ENCODE measurements at regions of chr1 and their contacts with region 1.

Region 1: GRCh38 chr1:23634842-23635651 is 56.6 kb upstream of the RPL11 start:
- DNase-seq: peak; percentile 70
- H3K4me3 Mint-ChIP-seq: peak overlapping the region; percentile 35
- H3K27ac Mint-ChIP-seq: peak overlapping the region; percentile 36
- H3K4me1 Mint-ChIP-seq: peaks cover 22% of the 10 kb centered on the region
- H3K27me3 Mint-ChIP-seq: peaks cover 2% of the 10 kb centered on the region

Region 2: DNA sequence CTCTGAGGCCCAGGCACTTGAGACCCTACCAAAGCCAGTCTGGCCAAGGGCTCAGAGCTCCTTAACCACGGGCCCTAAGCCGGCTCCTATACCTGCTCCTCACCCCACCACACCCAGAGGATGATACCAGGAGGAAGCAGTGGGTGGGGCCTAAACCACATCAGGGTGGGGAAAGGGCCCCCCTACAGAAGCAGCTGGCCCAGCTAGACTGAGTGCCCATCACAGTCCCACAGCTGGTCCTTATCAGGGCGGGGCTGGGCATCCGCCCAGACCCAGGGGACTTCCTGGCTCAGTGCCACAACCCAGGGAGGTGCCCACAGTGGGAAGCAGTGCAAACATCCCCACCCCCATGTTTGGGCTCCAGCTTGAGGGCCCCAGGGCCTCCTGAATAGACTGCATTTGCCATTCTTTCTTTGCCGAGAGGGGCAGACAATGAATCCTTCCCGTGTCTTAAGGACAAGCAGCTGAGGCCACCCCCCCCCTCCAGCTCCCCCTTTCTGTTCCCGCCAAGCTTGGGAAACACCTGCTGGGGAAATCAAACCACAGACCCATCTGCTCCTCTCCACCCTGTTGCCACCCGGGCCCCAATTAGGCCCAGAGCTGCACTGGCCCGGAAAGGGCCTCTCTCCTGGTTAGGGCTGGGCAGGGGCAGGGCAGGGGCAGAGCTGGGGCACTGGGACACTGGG is 110.2 kb before region 1 on chr1:
- CTCF ChIA-PET with region 1: interaction called, 23 read pairs
- POLR2A ChIA-PET with region 1: no interaction called
- intact Hi-C with region 1: no loop called
- DNase-seq: peak; percentile 38
- H3K4me3 Mint-ChIP-seq: no peak overlapping the region
- H3K27ac Mint-ChIP-seq: peak overlapping the region; percentile 33
- H3K4me1 Mint-ChIP-seq: peaks cover 62% of the 10 kb centered on the region
- H3K27me3 Mint-ChIP-seq: no peaks in the 10 kb centered on the region

Region 3: GRCh38 chr1:23559136-23559984 is 75.7 kb before region 1 on chr1 and contains the start of gene ID3:
- CTCF ChIA-PET with region 1: interaction called, 913 read pairs
- POLR2A ChIA-PET with region 1: interaction called, 10 read pairs
- intact Hi-C with region 1: loop called (anchors 2 kb)
- DNase-seq: peak; percentile 95
- H3K4me3 Mint-ChIP-seq: peak within 1 kb of the TSS; percentile 91
- H3K27ac Mint-ChIP-seq: peak within 1 kb of the TSS; percentile 73
- H3K4me1 Mint-ChIP-seq: peaks cover 49% of the 10 kb centered on the region
- H3K27me3 Mint-ChIP-seq: no peaks in the 10 kb centered on the region
- total RNA-seq, gene ID3: 35.9 to 36.2 TPM

Region 4: DNA sequence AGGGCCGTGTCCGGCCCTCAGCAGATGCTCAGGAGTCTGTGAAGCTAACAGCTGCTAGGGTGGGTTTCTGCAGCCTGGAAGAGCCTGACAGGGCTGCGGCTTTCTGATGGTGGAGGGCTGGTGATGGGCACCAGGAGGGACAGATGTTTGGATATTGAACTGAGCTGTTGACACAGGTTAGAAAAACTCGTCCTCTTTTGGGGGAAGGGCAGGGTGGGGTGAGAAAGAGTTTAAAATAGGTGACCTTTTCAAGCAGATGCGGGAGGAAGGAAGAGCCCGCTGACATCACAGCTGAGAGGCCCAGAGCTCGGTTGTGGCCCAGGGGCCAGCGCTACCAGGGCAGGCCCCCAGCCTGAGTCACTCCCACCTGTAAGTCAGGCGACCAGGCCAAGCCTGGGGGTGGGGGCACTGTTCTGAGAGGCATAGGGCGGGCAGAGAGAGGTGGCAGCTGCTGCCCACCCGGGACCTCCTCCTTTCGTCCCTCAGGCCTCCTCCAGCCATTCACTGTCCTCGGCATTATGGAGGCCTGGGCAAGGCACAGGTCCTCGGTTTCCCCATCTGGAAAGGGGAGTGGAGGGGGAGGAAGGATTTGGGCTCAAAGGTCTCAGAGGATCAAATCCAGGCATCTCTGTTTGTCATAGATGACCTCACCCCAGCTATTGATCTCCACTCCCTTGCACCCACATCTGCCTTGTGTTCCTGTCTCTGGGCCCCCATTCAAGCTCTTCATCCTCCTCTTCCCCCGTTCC is 43.4 kb before region 1 on chr1:
- CTCF ChIA-PET with region 1: interaction called, 37 read pairs
- POLR2A ChIA-PET with region 1: no interaction called
- intact Hi-C with region 1: loop called (anchors 2 kb)
- DNase-seq: peak; percentile 82
- H3K4me3 Mint-ChIP-seq: peak overlapping the region; percentile 13
- H3K27ac Mint-ChIP-seq: peak overlapping the region; percentile 79
- H3K4me1 Mint-ChIP-seq: peaks cover 53% of the 10 kb centered on the region
- H3K27me3 Mint-ChIP-seq: no peaks in the 10 kb centered on the region

Region 5: GRCh38 chr1:23619299-23620188 is 15.5 kb before region 1 on chr1:
- CTCF ChIA-PET with region 1: interaction called, 43 read pairs
- POLR2A ChIA-PET with region 1: no interaction called
- intact Hi-C with region 1: no loop called
- DNase-seq: peak; percentile 90
- H3K4me3 Mint-ChIP-seq: peak overlapping the region; percentile 67
- H3K27ac Mint-ChIP-seq: peak overlapping the region; percentile 76
- H3K4me1 Mint-ChIP-seq: peaks cover 76% of the 10 kb centered on the region
- H3K27me3 Mint-ChIP-seq: no peaks in the 10 kb centered on the region

Region 6: DNA sequence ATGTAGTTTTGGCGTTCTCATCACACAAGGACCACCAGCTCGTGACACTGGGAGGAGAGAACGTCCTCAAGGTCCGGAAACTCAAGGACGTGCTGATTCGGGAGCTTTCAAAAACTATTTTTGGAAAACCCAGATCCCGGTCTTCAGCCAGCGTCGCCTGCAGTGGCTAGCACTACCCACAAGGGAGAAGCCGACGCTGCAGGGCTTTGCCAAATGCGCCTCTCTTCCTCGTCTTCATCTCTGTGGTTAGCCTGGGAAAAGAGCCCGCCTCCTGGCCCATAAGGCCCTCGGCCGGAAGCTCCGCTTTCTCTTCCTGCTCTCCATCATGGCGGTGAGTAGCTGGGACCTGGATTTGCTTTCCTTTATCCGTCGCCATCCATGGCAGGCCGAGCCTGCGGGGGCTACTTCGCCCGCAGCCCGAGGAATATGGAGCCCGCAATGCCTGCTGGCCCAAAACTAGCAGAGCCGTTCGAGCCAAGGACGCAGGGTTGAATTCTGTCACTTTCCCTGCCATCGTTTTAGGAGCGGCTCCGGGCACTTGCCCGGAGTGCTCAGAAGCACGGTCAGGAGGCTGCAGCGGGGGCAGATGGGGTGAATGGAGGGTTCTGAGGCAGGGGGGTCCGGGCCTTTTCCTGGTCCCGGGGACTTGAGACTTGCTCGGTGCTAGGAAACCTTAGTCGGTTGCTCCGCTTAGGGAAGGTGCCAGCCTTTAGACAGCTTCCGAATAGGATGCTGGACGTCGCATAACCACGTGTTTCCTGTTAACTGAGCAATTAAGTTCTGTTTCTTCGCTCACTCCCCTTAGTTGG is 56.7 kb after region 1 on chr1 and contains the start of gene RPL11:
- CTCF ChIA-PET with region 1: interaction called, 10 read pairs
- POLR2A ChIA-PET with region 1: no interaction called
- intact Hi-C with region 1: no loop called
- DNase-seq: peak; percentile 93
- H3K4me3 Mint-ChIP-seq: peak within 1 kb of the TSS; percentile 92
- H3K27ac Mint-ChIP-seq: peak within 1 kb of the TSS; percentile 78
- H3K4me1 Mint-ChIP-seq: peaks cover 42% of the 10 kb centered on the region
- H3K27me3 Mint-ChIP-seq: no peaks in the 10 kb centered on the region
- total RNA-seq, gene RPL11: 1,338 to 1,385 TPM

Measured in activated CD4-positive, alpha-beta memory T cell treated with anti-CD3 and anti-CD28 coated beads for 36 hours (primary cell).